ENCODE measurements at regions of chr16 and their contacts with region 1.

Region 1: GRCh38 chr16:67159593-67160406 is at the starts of genes FBXL8 and TRADD:
- DNase-seq: peak; percentile 90
- ATAC-seq: peak; percentile 69
- H3K4me3 ChIP-seq: peak within 1 kb of the TSS; percentile 67 to 98 (median 96)
- H3K4me3 Mint-ChIP-seq: peak within 1 kb of the TSS; percentile 92
- H3K27ac ChIP-seq: peak within 1 kb of the TSS; percentile 97 to 99
- H3K27ac Mint-ChIP-seq: peak within 1 kb of the TSS; percentile 97
- H3K4me1 ChIP-seq: peaks cover 61 to 76% of the 10 kb centered on the region in 2 donors
- H3K4me1 Mint-ChIP-seq: peaks cover 60% of the 10 kb centered on the region
- H3K27me3 ChIP-seq: peaks cover 0 to 44% (median 21%) of the 10 kb centered on the region in 4 experiments
- H3K27me3 Mint-ChIP-seq: peaks cover 19% of the 10 kb centered on the region
- CTCF ChIP-seq: peak; percentile 67
- total RNA-seq, gene FBXL8: 5.1 and 5.8 TPM in 2 replicates
- total RNA-seq, gene TRADD: 51.9 and 52.4 TPM in 2 replicates

Region 2: GRCh38 chr16:66954097-66954659 is 205.6 kb before region 1 on chr16:
- CTCF ChIA-PET with region 1: interaction called, 13 read pairs
- POLR2A ChIA-PET with region 1: interaction called, 3 read pairs
- intact Hi-C with region 1: loop called (anchors 2 kb)
- DNase-seq: peak; percentile 77
- ATAC-seq: peak; percentile 82
- H3K4me3 ChIP-seq: no peak overlapping the region
- H3K4me3 Mint-ChIP-seq: no peak overlapping the region
- H3K27ac ChIP-seq: no peak overlapping the region
- H3K27ac Mint-ChIP-seq: no peak overlapping the region
- H3K4me1 ChIP-seq: peaks cover 0 to 4% of the 10 kb centered on the region in 2 donors
- H3K4me1 Mint-ChIP-seq: no peaks in the 10 kb centered on the region
- H3K27me3 ChIP-seq: peaks cover 0 to 22% (median 13%) of the 10 kb centered on the region in 4 experiments
- H3K27me3 Mint-ChIP-seq: peaks cover 52% of the 10 kb centered on the region
- CTCF ChIP-seq: peak; percentile 86

Region 3: DNA sequence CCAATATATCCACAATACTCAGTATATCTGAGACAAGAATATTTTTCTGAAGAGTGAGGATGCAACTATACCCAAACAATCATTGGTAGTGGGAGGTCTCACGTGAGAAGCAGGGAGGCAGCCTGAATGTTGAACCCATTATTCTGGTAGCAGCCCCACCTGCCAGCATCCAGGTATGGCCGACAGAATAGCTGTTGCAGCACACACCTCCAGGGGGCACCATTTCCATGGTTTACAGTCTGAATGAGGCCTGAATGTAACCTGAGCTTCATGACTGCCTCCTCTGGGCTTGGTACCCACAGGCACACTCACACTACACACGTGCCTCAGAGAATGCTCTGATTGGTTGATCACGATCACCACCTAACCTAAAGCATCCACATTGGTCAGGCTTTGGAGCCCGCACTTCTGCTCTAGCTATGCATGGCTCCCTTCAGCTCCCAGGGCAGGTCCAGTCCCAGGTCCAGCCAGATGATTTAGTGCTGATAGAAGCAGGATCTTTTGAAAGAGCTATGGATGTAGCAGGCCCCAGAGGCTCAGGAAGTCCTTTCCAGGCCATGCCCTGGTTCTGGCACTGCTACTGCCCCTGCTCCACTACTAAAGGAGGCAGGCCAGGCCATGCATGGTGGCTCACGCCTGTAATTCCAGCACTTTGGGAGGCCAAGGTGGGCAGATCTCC is 141.9 kb before region 1 on chr16:
- CTCF ChIA-PET with region 1: interaction called, 27 read pairs
- POLR2A ChIA-PET with region 1: interaction called, 5 read pairs
- intact Hi-C with region 1: loop called (anchors 1 kb)
- DNase-seq: peak; percentile 80
- ATAC-seq: peak; percentile 74
- H3K4me3 ChIP-seq: no peak overlapping the region
- H3K4me3 Mint-ChIP-seq: no peak overlapping the region
- H3K27ac ChIP-seq: no peak overlapping the region
- H3K27ac Mint-ChIP-seq: no peak overlapping the region
- H3K4me1 ChIP-seq: peaks cover 12 to 13% of the 10 kb centered on the region in 2 donors
- H3K4me1 Mint-ChIP-seq: peaks cover 2% of the 10 kb centered on the region
- H3K27me3 ChIP-seq: peaks cover 0 to 15% (median 7%) of the 10 kb centered on the region in 4 experiments
- H3K27me3 Mint-ChIP-seq: peaks cover 5% of the 10 kb centered on the region
- CTCF ChIP-seq: peak; percentile 53

Region 4: DNA sequence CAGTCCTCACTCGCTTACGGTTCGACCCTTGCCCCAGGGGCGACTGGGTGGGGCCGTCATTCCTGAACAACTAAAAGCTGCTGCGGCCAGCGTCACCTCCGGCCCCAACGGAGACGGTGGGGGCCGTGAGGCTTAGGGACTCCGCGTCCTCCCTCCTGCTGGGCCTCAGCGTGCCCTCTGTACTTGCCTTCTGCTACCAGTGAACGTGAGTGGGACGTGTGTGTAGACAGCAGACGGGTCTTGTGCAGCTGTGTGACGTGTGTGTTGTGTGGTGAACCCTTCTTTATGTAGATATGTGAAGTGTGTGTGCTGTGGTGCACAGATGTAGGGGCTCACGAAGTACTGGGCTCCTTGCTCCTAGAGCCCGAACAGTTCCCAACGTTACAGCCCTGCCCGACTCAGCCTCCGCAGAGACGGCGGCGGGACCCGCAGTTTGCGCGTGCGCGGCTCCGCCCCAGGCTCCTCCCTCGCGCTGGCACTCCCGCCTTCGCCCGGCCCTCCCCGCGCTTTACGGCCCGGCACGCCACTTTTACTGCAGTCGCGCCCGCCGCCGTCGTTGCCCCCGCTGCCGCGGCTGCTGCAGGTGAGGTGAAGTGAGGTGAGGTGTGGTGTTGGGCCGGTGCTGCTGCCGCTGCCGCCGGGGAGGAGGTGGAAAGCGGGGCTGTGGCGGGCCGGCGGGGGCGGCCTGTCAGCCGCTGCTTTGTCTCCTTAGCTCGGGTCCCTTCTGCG is 50.2 kb before region 1 on chr16 and contains the start of gene PHAF1:
- CTCF ChIA-PET with region 1: interaction called, 12 read pairs
- POLR2A ChIA-PET with region 1: no interaction called
- intact Hi-C with region 1: loop called (anchors 1 kb)
- DNase-seq: peak; percentile 95
- ATAC-seq: peak; percentile 94
- H3K4me3 ChIP-seq: peak within 1 kb of the TSS; percentile 68 to 92 (median 84)
- H3K4me3 Mint-ChIP-seq: peak within 1 kb of the TSS; percentile 93
- H3K27ac ChIP-seq: peak within 1 kb of the TSS; percentile 22 to 70
- H3K27ac Mint-ChIP-seq: peak within 1 kb of the TSS; percentile 82
- H3K4me1 ChIP-seq: peaks cover 25 to 34% of the 10 kb centered on the region in 2 donors
- H3K4me1 Mint-ChIP-seq: peaks cover 37% of the 10 kb centered on the region
- H3K27me3 ChIP-seq: no peaks in the 10 kb centered on the region
- H3K27me3 Mint-ChIP-seq: no peaks in the 10 kb centered on the region
- CTCF ChIP-seq: no peak
- total RNA-seq, gene PHAF1: 20.7 and 23.0 TPM in 2 replicates

Region 5: GRCh38 chr16:67183627-67184328 is 24.0 kb after region 1 on chr16 and contains the start of gene MATCAP1:
- CTCF ChIA-PET with region 1: interaction called, 15 read pairs
- POLR2A ChIA-PET with region 1: interaction called, 4 read pairs
- intact Hi-C with region 1: loop called (anchors 1 kb)
- DNase-seq: peak; percentile 98
- ATAC-seq: peak; percentile 96
- H3K4me3 ChIP-seq: peak within 1 kb of the TSS; percentile 66 to 95 (median 76)
- H3K4me3 Mint-ChIP-seq: peak within 1 kb of the TSS; percentile 93
- H3K27ac ChIP-seq: peak within 1 kb of the TSS; percentile 76 to 96
- H3K27ac Mint-ChIP-seq: peak within 1 kb of the TSS; percentile 50
- H3K4me1 ChIP-seq: peaks cover 20 to 22% of the 10 kb centered on the region in 2 donors
- H3K4me1 Mint-ChIP-seq: peaks cover 13% of the 10 kb centered on the region
- H3K27me3 ChIP-seq: peaks cover 0 to 39% (median 8%) of the 10 kb centered on the region in 4 experiments
- H3K27me3 Mint-ChIP-seq: peaks cover 14% of the 10 kb centered on the region
- CTCF ChIP-seq: no peak
- total RNA-seq, gene MATCAP1: 6.2 and 12.4 TPM in 2 replicates

Region 6: GRCh38 chr16:67216612-67217490 is 57.1 kb after region 1 on chr16:
- CTCF ChIA-PET with region 1: no interaction called
- POLR2A ChIA-PET with region 1: no interaction called
- intact Hi-C with region 1: no loop called
- DNase-seq: no peak
- ATAC-seq: no peak
- H3K4me3 ChIP-seq: no peak overlapping the region
- H3K4me3 Mint-ChIP-seq: no peak overlapping the region
- H3K27ac ChIP-seq: no peak overlapping the region
- H3K27ac Mint-ChIP-seq: no peak overlapping the region
- H3K4me1 ChIP-seq: no peaks in the 10 kb centered on the region
- H3K4me1 Mint-ChIP-seq: no peaks in the 10 kb centered on the region
- H3K27me3 ChIP-seq: no peaks in the 10 kb centered on the region
- H3K27me3 Mint-ChIP-seq: no peaks in the 10 kb centered on the region
- CTCF ChIP-seq: no peak

Region 7: DNA sequence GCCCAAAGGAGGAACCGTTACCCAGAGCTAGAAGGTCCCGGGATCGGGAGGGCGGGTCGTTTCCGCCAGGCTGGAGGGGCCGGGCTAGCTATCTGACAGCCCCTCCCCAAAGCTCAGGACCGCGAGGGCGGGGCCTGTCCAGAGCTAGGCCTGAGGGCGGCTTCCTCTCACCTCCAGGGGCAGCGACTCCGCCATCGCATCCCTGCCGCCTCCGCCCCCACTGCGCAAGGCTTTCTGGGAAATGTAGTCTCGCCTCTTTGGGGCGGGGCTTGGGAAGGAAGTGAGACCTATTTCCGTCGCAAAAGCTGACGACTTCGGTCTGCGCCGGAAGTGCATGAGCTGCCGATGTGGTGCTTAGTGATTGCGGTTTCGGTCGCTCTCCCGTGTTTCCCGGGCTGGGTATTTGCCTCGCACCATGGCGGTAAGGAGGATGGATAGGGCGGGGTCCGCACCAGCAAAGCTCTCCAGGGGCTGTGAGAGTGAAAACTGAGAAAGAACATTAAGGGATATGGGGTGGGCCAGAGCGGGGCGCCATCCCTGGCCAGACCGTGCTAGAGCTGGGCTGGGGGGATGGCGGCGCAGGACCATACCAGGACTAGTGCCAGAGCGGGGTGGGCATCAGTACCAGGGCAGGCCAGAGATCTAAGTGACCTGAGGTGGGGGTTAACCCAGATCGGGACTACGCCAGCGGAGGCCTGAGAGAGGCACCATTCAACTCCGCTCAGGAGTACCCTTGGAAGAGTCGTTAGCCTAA is 67.2 kb after region 1 on chr16 and contains the start of gene TMEM208:
- CTCF ChIA-PET with region 1: no interaction called
- POLR2A ChIA-PET with region 1: no interaction called
- intact Hi-C with region 1: loop called (anchors 1 kb)
- DNase-seq: peak; percentile 99
- ATAC-seq: peak; percentile 99
- H3K4me3 ChIP-seq: peak within 1 kb of the TSS; percentile 77 to 99 (median 86)
- H3K4me3 Mint-ChIP-seq: peak within 1 kb of the TSS; percentile 100
- H3K27ac ChIP-seq: peak within 1 kb of the TSS; percentile 52 to 82
- H3K27ac Mint-ChIP-seq: peak within 1 kb of the TSS; percentile 100
- H3K4me1 ChIP-seq: peaks cover 15 to 22% of the 10 kb centered on the region in 2 donors
- H3K4me1 Mint-ChIP-seq: peaks cover 29% of the 10 kb centered on the region
- H3K27me3 ChIP-seq: no peaks in the 10 kb centered on the region
- H3K27me3 Mint-ChIP-seq: no peaks in the 10 kb centered on the region
- CTCF ChIP-seq: peak; percentile 13
- total RNA-seq, gene TMEM208: 36.3 and 40.4 TPM in 2 replicates

Region 8: DNA sequence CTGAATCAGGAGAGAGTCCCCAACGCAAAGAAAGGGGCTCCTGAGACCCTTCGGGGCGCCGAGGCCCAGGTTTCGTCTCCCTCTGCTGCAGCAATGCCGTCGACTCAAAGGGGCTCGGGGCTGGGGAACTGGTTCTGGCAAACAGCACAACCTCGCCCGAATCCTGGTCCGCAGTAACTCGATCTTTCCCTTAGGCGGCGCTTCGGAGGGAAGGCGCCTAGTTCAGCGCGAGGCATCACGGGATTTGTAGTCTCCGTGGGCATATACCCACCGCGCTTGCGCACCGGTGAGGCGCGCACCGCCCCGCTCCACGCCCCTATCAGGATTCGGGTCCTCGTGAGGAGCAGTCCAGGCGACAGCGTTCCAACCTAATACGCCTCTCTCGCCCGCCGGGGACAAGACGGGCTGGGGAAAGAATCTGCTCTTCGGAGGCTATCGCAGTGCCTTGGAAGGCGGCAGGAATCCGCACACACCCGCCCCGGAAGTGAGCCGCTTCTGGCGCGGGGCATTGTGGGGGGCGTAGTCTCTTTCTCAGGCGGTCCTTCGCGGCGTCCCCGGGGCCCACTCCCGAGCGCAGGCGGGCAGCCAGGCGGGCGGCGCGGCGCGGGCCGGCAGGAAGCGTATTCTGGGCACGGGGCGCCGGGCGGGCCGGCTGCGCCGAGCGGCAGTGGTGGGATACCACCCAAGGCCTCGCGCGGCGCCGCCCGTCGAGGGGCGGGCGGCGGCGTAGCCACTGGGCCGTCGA is 682.1 kb after region 1 on chr16 and contains the start of gene THAP11:
- CTCF ChIA-PET with region 1: no interaction called
- POLR2A ChIA-PET with region 1: no interaction called
- intact Hi-C with region 1: no loop called
- DNase-seq: peak; percentile 98
- ATAC-seq: peak; percentile 58
- H3K4me3 ChIP-seq: peak within 1 kb of the TSS; percentile 74 to 98 (median 89)
- H3K4me3 Mint-ChIP-seq: peak within 1 kb of the TSS; percentile 96
- H3K27ac ChIP-seq: peak within 1 kb of the TSS; percentile 87 to 96
- H3K27ac Mint-ChIP-seq: peak within 1 kb of the TSS; percentile 98
- H3K4me1 ChIP-seq: peaks cover 31 to 42% of the 10 kb centered on the region in 2 donors
- H3K4me1 Mint-ChIP-seq: peaks cover 36% of the 10 kb centered on the region
- H3K27me3 ChIP-seq: no peaks in the 10 kb centered on the region
- H3K27me3 Mint-ChIP-seq: no peaks in the 10 kb centered on the region
- CTCF ChIP-seq: peak; percentile 83
- total RNA-seq, gene THAP11: 42.7 and 44.0 TPM in 2 replicates

Measured in B cell (primary cell).